BJ (cell line): ENCODE measurements at regions of chr9 and their contacts with region 1.

Region 1: GRCh38 chr9:133955821-133956411 is 36.2 kb downstream of the VAV2 start:
- DNase-seq: no peak
- H3K4me3 ChIP-seq: no peak overlapping the region
- H3K27me3 ChIP-seq: no peaks in the 10 kb centered on the region
- CTCF ChIP-seq: peak; percentile 44

Region 2: GRCh38 chr9:134024828-134025605 is 69.1 kb after region 1 on chr9 and contains the start of gene BRD3OS:
- CTCF ChIA-PET with region 1: no interaction called
- POLR2A ChIA-PET with region 1: interaction called, 12 read pairs
- DNase-seq: peak; percentile 89
- H3K4me3 ChIP-seq: peak within 1 kb of the TSS; percentile 75
- H3K27me3 ChIP-seq: no peaks in the 10 kb centered on the region
- CTCF ChIP-seq: no peak
- polyA plus RNA-seq, gene BRD3OS: 16.4 and 23.5 TPM in 2 replicates